WTC11 (cell line): ENCODE measurements at regions of chr20 and their contacts with region 1.

Region 1: GRCh38 chr20:61874501-61875026 is 191.1 kb downstream of the TAF4 start:
- DNase-seq: peak; percentile 77
- ATAC-seq: peak; percentile 92
- H3K4me3 Mint-ChIP-seq: no peak overlapping the region
- H3K27ac Mint-ChIP-seq: no peak overlapping the region
- H3K4me1 Mint-ChIP-seq: no peaks in the 10 kb centered on the region
- H3K27me3 Mint-ChIP-seq: peaks cover 3% of the 10 kb centered on the region
- CTCF ChIP-seq: no peak

Region 2: GRCh38 chr20:61886721-61887594 is 12.4 kb after region 1 on chr20:
- CTCF ChIA-PET with region 1: interaction called, 43 read pairs
- POLR2A ChIA-PET with region 1: no interaction called
- DNase-seq: peak; percentile 66
- ATAC-seq: peak; percentile 83
- H3K4me3 Mint-ChIP-seq: no peak overlapping the region
- H3K27ac Mint-ChIP-seq: no peak overlapping the region
- H3K4me1 Mint-ChIP-seq: no peaks in the 10 kb centered on the region; the same call in 1 of the 2 replicates
- H3K27me3 Mint-ChIP-seq: peaks cover 10% of the 10 kb centered on the region
- CTCF ChIP-seq: peak; percentile 79

Region 3: GRCh38 chr20:61896058-61896961 is 21.7 kb after region 1 on chr20:
- CTCF ChIA-PET with region 1: interaction called, 18 read pairs
- POLR2A ChIA-PET with region 1: no interaction called
- DNase-seq: peak; percentile 74
- ATAC-seq: peak; percentile 93
- H3K4me3 Mint-ChIP-seq: no peak overlapping the region
- H3K27ac Mint-ChIP-seq: no peak overlapping the region
- H3K4me1 Mint-ChIP-seq: no peaks in the 10 kb centered on the region
- H3K27me3 Mint-ChIP-seq: peaks cover 19% of the 10 kb centered on the region
- CTCF ChIP-seq: peak; percentile 74